CD8-positive, alpha-beta memory T cell (primary cell): ENCODE measurements at regions of chr5 and their contacts with region 1.

Region 1: GRCh38 chr5:128201065-128201926 is 117.7 kb downstream of the SLC12A2 start:
- DNase-seq: peak; percentile 64 to 85 (median 72)
- H3K4me3 ChIP-seq: no peak overlapping the region
- H3K4me3 Mint-ChIP-seq: peak overlapping the region in 6 of 7 donors; percentile 16 to 40 (median 27)
- H3K27ac ChIP-seq: no peak overlapping the region
- H3K27ac Mint-ChIP-seq: peak overlapping the region in 4 of 8 donors; percentile 3 to 35 (median 28)
- H3K4me1 ChIP-seq: peaks cover 22% of the 10 kb centered on the region
- H3K4me1 Mint-ChIP-seq: peaks cover 11 to 27% (median 24%) of the 10 kb centered on the region in 3 donors
- H3K27me3 ChIP-seq: no peaks in the 10 kb centered on the region
- H3K27me3 Mint-ChIP-seq: peaks cover 1 to 4% of the 10 kb centered on the region in 2 donors

Region 2: GRCh38 chr5:127564002-127564769 is 637.1 kb before region 1 on chr5:
- CTCF ChIA-PET with region 1: interaction called, 14 read pairs
- POLR2A ChIA-PET with region 1: no interaction called
- DNase-seq: peak; percentile 11 to 54 (median 43)
- H3K4me3 ChIP-seq: no peak overlapping the region
- H3K4me3 Mint-ChIP-seq: no peak overlapping the region
- H3K27ac ChIP-seq: no peak overlapping the region
- H3K27ac Mint-ChIP-seq: peak overlapping the region in 1 of 8 donors; percentile 21
- H3K4me1 ChIP-seq: no peaks in the 10 kb centered on the region
- H3K4me1 Mint-ChIP-seq: peaks cover 7 to 17% (median 14%) of the 10 kb centered on the region in 3 donors
- H3K27me3 ChIP-seq: no peaks in the 10 kb centered on the region
- H3K27me3 Mint-ChIP-seq: peaks cover 3 to 13% of the 10 kb centered on the region in 2 donors

Region 3: DNA sequence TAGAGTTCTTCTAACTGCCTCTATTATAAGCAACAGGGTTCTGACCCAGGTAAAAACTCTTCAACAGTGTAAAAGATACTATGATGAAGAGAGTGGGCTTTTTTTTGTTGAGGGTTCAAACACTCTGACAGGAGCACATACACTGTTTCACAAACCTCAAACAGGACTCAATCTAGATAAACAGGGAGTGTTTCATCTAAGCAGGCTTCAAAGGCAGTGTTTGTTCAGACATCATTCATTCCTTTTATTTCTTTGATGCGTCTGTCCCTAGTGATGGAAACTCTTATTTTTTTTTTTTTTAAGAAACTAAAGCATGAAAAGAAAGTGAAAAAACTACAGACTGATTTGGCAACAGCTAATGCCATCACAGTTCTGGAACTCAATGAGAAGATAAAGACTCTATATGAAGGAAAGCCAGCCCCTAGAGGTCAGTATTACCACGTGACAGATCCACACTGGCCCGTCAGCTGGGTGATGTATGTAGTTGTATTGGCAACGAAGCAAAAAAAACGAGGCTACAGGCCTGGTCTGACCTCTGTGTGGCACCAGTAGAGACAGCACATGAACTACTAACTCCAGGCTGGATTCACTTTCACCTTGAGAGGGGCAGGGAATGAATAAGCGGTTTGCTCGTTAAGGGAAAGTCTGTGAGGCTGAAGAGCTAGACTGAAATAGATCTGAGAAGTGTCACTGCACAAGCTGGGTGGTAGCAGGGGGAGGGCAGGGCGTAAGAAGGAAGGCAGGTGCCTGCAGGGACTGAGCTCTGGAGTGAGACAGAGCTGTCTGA is 325.9 kb before region 1 on chr5:
- CTCF ChIA-PET with region 1: interaction called, 13 read pairs
- POLR2A ChIA-PET with region 1: no interaction called
- DNase-seq: peak in 2 of 5 donors; percentile 3 to 48
- H3K4me3 ChIP-seq: no peak overlapping the region
- H3K4me3 Mint-ChIP-seq: no peak overlapping the region
- H3K27ac ChIP-seq: no peak overlapping the region
- H3K27ac Mint-ChIP-seq: no peak overlapping the region
- H3K4me1 ChIP-seq: no peaks in the 10 kb centered on the region
- H3K4me1 Mint-ChIP-seq: no peaks in the 10 kb centered on the region
- H3K27me3 ChIP-seq: no peaks in the 10 kb centered on the region
- H3K27me3 Mint-ChIP-seq: peaks cover 8 to 9% of the 10 kb centered on the region in 2 donors

Region 4: DNA sequence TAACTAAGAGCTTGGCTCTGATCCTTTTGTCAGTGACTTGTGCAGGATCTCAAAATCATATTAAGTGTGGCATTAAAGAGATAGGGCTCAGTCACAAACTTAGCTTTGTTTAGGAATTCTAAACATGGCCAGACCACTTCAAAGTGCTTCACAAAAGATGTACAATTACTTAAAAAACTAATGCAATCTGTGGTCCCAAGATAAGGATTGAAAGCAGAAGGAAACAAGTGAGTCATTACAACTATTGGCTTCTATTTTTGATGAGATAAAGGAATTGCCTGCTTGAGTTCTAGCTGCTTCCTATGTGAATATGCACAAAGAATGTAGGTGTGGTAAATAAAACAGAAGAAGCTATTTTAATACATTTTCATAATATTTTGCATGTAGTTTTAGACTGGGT is 162.7 kb before region 1 on chr5:
- CTCF ChIA-PET with region 1: no interaction called
- POLR2A ChIA-PET with region 1: no interaction called
- DNase-seq: no peak
- H3K4me3 ChIP-seq: no peak overlapping the region
- H3K4me3 Mint-ChIP-seq: no peak overlapping the region
- H3K27ac ChIP-seq: no peak overlapping the region
- H3K27ac Mint-ChIP-seq: no peak overlapping the region
- H3K4me1 ChIP-seq: no peaks in the 10 kb centered on the region
- H3K4me1 Mint-ChIP-seq: peaks cover 4 to 8% (median 4%) of the 10 kb centered on the region in 3 donors
- H3K27me3 ChIP-seq: no peaks in the 10 kb centered on the region
- H3K27me3 Mint-ChIP-seq: no peaks in the 10 kb centered on the region

Region 5: GRCh38 chr5:128212191-128212806 is 11.0 kb after region 1 on chr5:
- CTCF ChIA-PET with region 1: interaction called, 10 read pairs
- POLR2A ChIA-PET with region 1: no interaction called
- DNase-seq: no peak
- H3K4me3 ChIP-seq: no peak overlapping the region
- H3K4me3 Mint-ChIP-seq: no peak overlapping the region
- H3K27ac ChIP-seq: no peak overlapping the region
- H3K27ac Mint-ChIP-seq: no peak overlapping the region
- H3K4me1 ChIP-seq: no peaks in the 10 kb centered on the region
- H3K4me1 Mint-ChIP-seq: peaks cover 2 to 4% (median 3%) of the 10 kb centered on the region in 3 donors
- H3K27me3 ChIP-seq: no peaks in the 10 kb centered on the region
- H3K27me3 Mint-ChIP-seq: peaks cover 4 to 11% of the 10 kb centered on the region in 2 donors